ENCODE measurements at regions of chr19 and their contacts with region 1.

Region 1: GRCh38 chr19:33373701-33374421 is at the start of gene CEBPG:
- DNase-seq: peak; percentile 67
- H3K4me3 Mint-ChIP-seq: peak within 1 kb of the TSS; percentile 88
- H3K27ac Mint-ChIP-seq: peak within 1 kb of the TSS; percentile 83
- H3K4me1 Mint-ChIP-seq: peaks cover 51% of the 10 kb centered on the region
- H3K27me3 Mint-ChIP-seq: no peaks in the 10 kb centered on the region
- total RNA-seq, gene CEBPG: 37.3 to 38.7 TPM

Region 2: GRCh38 chr19:32971715-32972540 is 401.9 kb before region 1 on chr19 and contains the starts of genes CEP89 and FAAP24:
- CTCF ChIA-PET with region 1: no interaction called
- intact Hi-C with region 1: loop called (anchors 10 kb)
- DNase-seq: peak; percentile 99
- H3K4me3 Mint-ChIP-seq: peak within 1 kb of the TSS; percentile 97
- H3K27ac Mint-ChIP-seq: peak within 1 kb of the TSS; percentile 90
- H3K4me1 Mint-ChIP-seq: peaks cover 9% of the 10 kb centered on the region
- H3K27me3 Mint-ChIP-seq: no peaks in the 10 kb centered on the region
- total RNA-seq, gene CEP89: 14.6 to 15.5 TPM
- total RNA-seq, gene FAAP24: 9.6 to 10.5 TPM

Region 3: GRCh38 chr19:33080761-33081681 is 292.8 kb before region 1 on chr19 and contains the start of gene GPATCH1:
- CTCF ChIA-PET with region 1: no interaction called
- intact Hi-C with region 1: loop called (anchors 1 kb)
- DNase-seq: peak; percentile 89
- H3K4me3 Mint-ChIP-seq: peak within 1 kb of the TSS; percentile 99
- H3K27ac Mint-ChIP-seq: peak within 1 kb of the TSS; percentile 88
- H3K4me1 Mint-ChIP-seq: peaks cover 25% of the 10 kb centered on the region
- H3K27me3 Mint-ChIP-seq: no peaks in the 10 kb centered on the region
- total RNA-seq, gene GPATCH1: 8.3 to 9.1 TPM

Region 4: GRCh38 chr19:33280351-33280921 is 93.4 kb before region 1 on chr19:
- CTCF ChIA-PET with region 1: no interaction called
- intact Hi-C with region 1: loop called (anchors 1 kb)
- DNase-seq: peak; percentile 76
- H3K4me3 Mint-ChIP-seq: peak overlapping the region; percentile 43
- H3K27ac Mint-ChIP-seq: no peak overlapping the region
- H3K4me1 Mint-ChIP-seq: peaks cover 11% of the 10 kb centered on the region
- H3K27me3 Mint-ChIP-seq: peaks cover 17% of the 10 kb centered on the region

Region 5: DNA sequence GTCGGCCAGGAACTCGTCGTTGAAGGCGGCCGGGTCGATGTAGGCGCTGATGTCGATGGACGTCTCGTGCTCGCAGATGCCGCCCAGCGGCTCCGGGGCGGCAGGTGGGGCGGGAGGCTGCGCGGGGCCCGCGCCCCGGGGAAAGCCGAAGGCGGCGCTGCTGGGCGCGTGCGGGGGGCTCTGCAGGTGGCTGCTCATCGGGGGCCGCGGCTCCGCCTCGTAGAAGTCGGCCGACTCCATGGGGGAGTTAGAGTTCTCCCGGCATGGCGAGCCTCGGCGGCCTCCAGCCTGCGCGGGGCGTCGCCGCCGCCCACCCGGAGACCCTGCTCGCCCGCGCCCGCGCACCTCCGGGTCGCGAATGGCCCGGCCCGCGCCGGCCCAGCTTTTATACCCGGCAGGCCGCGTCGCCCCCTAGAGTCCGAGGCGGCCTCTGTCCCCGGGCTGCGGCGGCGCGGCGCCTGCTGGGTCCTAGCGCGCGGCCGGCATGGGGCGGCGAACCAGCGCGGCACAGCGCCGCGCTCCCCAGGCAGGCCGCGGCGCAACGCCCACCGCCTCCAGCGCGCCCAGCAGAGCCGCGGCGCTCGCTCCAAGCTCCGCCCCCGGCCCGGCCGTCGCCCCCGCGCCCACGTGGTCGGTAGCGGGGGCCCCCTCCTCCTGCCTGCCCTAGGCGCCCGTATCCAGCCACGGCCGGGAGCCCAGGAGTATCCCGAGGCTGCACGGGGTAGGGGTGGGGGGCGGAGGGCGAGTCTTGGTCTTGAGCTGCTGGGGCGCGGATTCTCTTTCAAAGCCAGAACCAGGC is 71.5 kb before region 1 on chr19 and contains the start of gene CEBPA:
- CTCF ChIA-PET with region 1: no interaction called
- intact Hi-C with region 1: loop called (anchors 1 kb)
- DNase-seq: peak; percentile 52
- H3K4me3 Mint-ChIP-seq: peak within 1 kb of the TSS; percentile 42
- H3K27ac Mint-ChIP-seq: no peak within 1 kb of the TSS
- H3K4me1 Mint-ChIP-seq: no peaks in the 10 kb centered on the region
- H3K27me3 Mint-ChIP-seq: peaks cover 35% of the 10 kb centered on the region
- total RNA-seq, gene CEBPA: 0.10 TPM

Region 6: DNA sequence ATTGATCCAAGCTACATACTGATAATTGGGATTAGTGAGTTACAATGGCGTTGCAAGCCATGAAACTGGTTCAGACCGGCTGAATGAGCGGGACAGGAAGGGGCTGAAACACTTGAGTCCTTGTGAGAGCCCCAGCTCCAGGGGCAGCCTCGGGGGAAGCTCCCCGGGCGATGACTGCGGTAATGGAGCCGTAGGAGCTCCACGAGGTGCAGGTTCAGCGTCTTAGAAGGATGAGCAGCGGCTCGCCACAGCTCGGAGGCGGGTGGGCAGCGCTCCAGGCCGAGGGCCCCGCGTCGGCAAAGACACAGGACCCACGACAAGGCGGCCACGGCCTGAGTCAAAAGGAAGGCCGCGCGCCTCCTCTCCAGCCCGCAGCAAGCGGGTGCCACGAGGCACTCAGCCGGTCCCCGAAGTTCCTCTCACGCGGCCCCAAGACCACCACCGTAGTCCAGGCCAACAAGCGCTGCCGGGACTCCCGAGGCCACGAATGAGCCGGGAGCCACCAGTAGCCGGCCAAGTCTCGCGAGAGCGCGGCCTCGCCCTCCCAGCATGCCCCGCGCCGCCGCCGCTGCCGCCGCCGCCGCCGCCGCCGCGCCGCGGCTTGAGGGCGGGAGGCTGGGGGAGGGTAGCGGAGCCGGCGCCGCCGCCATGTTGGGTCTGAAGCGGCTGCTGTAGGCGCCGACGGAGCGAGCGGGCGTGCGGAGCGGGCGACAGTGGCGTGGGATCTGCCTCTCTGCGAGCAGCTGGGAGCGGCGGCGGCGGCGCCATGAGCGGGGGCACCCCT is 798.2 kb after region 1 on chr19 and contains the start of gene LSM14A:
- CTCF ChIA-PET with region 1: no interaction called
- intact Hi-C with region 1: loop called (anchors 5 kb)
- DNase-seq: peak; percentile 90
- H3K4me3 Mint-ChIP-seq: peak within 1 kb of the TSS; percentile 96
- H3K27ac Mint-ChIP-seq: peak within 1 kb of the TSS; percentile 99
- H3K4me1 Mint-ChIP-seq: peaks cover 38% of the 10 kb centered on the region
- H3K27me3 Mint-ChIP-seq: no peaks in the 10 kb centered on the region
- total RNA-seq, gene LSM14A: 87.9 to 102 TPM

Region 7: GRCh38 chr19:34351382-34351826 is 977.5 kb after region 1 on chr19:
- CTCF ChIA-PET with region 1: no interaction called
- intact Hi-C with region 1: loop called (anchors 5 kb)
- DNase-seq: no peak
- H3K4me3 Mint-ChIP-seq: no peak overlapping the region
- H3K27ac Mint-ChIP-seq: peak overlapping the region; percentile 81
- H3K4me1 Mint-ChIP-seq: peaks cover 18% of the 10 kb centered on the region
- H3K27me3 Mint-ChIP-seq: no peaks in the 10 kb centered on the region

Measured in activated naive CD4-positive, alpha-beta T cell treated with anti-CD3 and anti-CD28 coated beads for 36 hours (primary cell).